Naive thymus-derived CD8-positive, alpha-beta T cell (primary cell): ENCODE measurements at regions of chr19 and their contacts with region 1.

Region 1: DNA sequence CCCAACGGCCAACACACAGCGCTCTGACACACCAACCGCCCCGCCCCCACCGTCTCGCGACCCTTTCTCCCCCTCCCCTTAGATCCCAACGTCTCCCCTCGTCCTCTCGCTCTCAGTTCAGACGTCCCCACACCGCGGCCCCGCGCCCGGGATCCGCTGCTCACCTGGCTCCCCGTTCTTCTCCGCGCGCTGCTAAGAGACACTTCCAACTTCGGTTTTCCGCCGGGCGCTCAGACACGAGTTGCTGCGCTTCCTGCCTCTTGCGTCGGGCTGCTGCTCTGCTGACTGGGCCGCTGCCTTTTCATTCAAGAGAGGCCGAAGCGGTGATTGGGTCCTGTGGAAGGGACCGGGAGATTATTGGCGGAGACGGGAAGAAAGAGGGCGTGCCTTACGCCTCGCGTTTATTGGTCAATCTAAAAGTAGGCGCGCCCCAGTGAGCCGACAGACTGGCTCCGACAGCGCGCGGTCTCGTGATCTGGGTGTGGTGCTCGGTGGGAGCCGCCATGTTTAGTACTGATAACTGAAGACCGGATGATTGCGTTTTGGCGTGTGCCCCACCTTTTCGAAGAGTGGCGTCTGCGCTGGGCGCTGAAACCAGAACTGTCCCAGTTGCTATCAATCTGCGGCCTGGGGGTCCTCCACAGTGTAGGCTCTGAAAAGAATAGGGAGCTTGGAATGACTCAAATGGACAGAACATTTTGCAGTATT is at the start of gene DDX39A:
- DNase-seq: peak; percentile 85 to 99 (median 98)
- ATAC-seq: peak; percentile 87 to 88
- H3K4me3 Mint-ChIP-seq: peak within 1 kb of the TSS; percentile 91 to 100 (median 97)
- H3K27ac Mint-ChIP-seq: peak within 1 kb of the TSS; percentile 95 to 100 (median 98)
- H3K4me1 Mint-ChIP-seq: peaks cover 21 to 41% (median 40%) of the 10 kb centered on the region in 4 donors
- H3K27me3 Mint-ChIP-seq: no peaks in the 10 kb centered on the region
- polyA plus RNA-seq, gene DDX39A: 96.0 to 136 (median 106) TPM

Region 2: GRCh38 chr19:14432791-14433553 is 13.7 kb after region 1 on chr19 and contains the start of gene PKN1:
- POLR2A ChIA-PET with region 1: interaction called, 36 read pairs
- DNase-seq: peak in 7 of 10 donors; percentile 27 to 60 (median 51)
- ATAC-seq: peak; percentile 20 to 48
- H3K4me3 Mint-ChIP-seq: peak within 1 kb of the TSS; percentile 76 to 93 (median 87)
- H3K27ac Mint-ChIP-seq: peak within 1 kb of the TSS; percentile 87 to 96 (median 93)
- H3K4me1 Mint-ChIP-seq: peaks cover 10 to 46% (median 38%) of the 10 kb centered on the region in 4 donors
- H3K27me3 Mint-ChIP-seq: peaks cover 0 to 1% (median 0%) of the 10 kb centered on the region in 5 donors
- polyA plus RNA-seq, gene PKN1: 45.5 to 96.6 (median 56.8) TPM

Region 3: DNA sequence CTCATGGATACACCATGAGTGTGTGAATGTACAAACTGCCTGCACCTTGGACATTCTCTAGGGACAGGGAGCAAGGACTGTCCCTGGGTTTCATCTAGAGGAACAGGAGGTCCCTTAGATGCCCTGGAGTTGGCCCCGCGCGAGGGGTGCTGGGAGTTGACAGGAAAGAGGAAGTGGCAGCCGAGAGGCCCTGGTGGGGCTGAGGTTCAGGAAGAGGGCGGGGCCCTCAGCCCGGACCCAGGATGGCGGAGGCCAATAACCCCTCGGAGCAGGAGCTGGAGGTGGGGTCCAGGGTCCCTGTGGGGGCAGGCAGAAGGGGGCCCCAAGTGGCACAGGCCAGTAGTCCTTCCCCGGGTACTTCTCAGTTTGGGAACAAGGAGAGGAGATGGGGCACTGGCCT is 20.8 kb after region 1 on chr19:
- POLR2A ChIA-PET with region 1: interaction called, 11 read pairs
- DNase-seq: peak; percentile 56 to 85 (median 74)
- ATAC-seq: peak; percentile 98 to 100
- H3K4me3 Mint-ChIP-seq: peak overlapping the region; percentile 86 to 100 (median 92)
- H3K27ac Mint-ChIP-seq: peak overlapping the region; percentile 89 to 98 (median 95)
- H3K4me1 Mint-ChIP-seq: peaks cover 26 to 73% (median 56%) of the 10 kb centered on the region in 4 donors
- H3K27me3 Mint-ChIP-seq: no peaks in the 10 kb centered on the region

Region 4: GRCh38 chr19:14459703-14460102 is 40.4 kb after region 1 on chr19:
- POLR2A ChIA-PET with region 1: no interaction called
- DNase-seq: peak in 1 of 10 donors; percentile 33
- ATAC-seq: peak; percentile 46 to 59
- H3K4me3 Mint-ChIP-seq: peak overlapping the region in 2 of 10 donors; percentile 23 to 62
- H3K27ac Mint-ChIP-seq: peak overlapping the region in 8 of 10 donors; percentile 22 to 78 (median 58)
- H3K4me1 Mint-ChIP-seq: peaks cover 0 to 14% (median 6%) of the 10 kb centered on the region in 4 donors
- H3K27me3 Mint-ChIP-seq: no peaks in the 10 kb centered on the region